ENCODE measurements at regions of chr15 and their contacts with region 1.

Region 1: GRCh38 chr15:46091860-46092450 is 457.1 kb downstream of the SQOR start:
- DNase-seq: peak; percentile 51
- H3K4me3 Mint-ChIP-seq: no peak overlapping the region
- H3K27ac Mint-ChIP-seq: no peak overlapping the region
- H3K4me1 Mint-ChIP-seq: no peaks in the 10 kb centered on the region
- H3K27me3 Mint-ChIP-seq: no peaks in the 10 kb centered on the region
- CTCF ChIP-seq: peak; percentile 23

Region 2: DNA sequence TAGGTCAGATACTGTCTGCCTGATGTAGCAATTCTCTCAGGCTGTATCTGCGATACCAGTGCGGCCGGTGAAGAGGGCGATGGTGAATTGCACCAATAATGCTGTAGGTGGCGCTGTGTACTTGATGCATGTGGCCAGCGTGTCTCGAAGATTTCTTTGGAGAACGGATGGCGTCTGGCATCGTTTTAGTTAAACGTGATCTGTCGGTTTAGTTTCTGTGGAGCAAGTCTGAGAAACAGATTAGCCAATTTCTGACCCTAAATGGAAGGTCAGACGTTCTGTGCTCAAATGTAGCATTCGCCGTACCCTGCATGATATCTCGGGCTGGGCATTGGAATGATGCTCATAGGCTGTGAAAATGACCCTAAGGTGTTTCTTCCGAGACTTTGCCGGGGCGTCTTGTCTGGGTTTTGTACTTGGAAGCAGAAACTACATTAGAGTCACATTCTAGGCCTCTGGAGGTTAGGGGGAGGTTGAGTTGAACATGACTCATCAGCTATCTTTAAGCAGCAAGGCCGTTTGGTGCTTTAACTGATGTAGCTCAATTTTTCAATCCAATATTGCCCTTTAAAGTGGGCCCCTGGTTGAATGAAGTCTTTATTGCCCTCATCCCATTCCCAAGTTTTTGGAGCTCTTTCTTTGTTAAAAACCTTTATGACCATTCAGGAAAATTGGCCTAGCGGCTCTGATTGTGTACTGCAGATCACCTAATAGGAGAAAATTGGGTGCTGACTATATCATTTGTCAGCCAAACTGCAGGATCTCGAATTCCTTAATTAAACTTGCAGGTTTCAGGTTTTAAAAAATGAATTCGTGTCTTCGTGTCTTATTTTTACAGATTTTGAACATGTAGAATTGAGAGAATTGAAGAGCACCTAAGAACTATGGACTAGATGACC is 377.1 kb before region 1 on chr15:
- CTCF ChIA-PET with region 1: no interaction called
- intact Hi-C with region 1: loop called (anchors 5 kb)
- DNase-seq: peak; percentile 67
- H3K4me3 Mint-ChIP-seq: peak overlapping the region; percentile 17
- H3K27ac Mint-ChIP-seq: no peak overlapping the region
- H3K4me1 Mint-ChIP-seq: no peaks in the 10 kb centered on the region
- H3K27me3 Mint-ChIP-seq: peaks cover 34% of the 10 kb centered on the region
- CTCF ChIP-seq: peak; percentile 50

Region 3: DNA sequence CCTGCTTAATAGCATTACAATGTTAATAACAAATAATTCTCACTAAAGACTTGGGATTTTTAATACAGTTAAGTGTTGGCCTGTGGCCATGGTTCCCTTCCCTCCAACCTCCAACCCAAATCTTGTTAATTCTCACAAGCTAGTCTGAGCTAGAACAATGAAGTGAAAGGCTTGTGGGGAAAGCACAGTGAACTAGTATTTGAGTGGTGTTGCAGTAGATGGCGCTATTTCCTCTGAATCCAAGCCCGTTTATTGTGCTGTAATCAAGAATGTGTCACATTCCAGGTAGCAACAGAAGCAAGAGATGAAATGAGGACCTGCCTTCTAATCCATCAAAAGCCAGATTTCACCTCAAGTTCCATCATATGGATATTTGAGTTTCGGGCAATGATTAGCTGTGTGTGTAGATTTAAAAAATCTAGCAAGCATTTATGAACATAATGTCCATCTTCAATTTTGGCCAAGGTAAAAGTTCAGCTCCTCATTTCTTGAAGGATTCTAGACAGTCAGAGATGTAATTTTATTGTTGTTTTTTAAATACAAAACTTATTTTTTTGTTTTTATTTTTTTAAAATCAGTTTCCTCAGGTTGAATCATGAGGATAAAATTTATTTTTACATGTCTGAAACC is 296.4 kb before region 1 on chr15:
- CTCF ChIA-PET with region 1: no interaction called
- intact Hi-C with region 1: loop called (anchors 1 kb)
- DNase-seq: peak; percentile 59
- H3K4me3 Mint-ChIP-seq: no peak overlapping the region
- H3K27ac Mint-ChIP-seq: no peak overlapping the region
- H3K4me1 Mint-ChIP-seq: no peaks in the 10 kb centered on the region
- H3K27me3 Mint-ChIP-seq: peaks cover 41% of the 10 kb centered on the region
- CTCF ChIP-seq: peak; percentile 40

Region 4: GRCh38 chr15:46260937-46261336 is 169.0 kb after region 1 on chr15:
- CTCF ChIA-PET with region 1: no interaction called
- intact Hi-C with region 1: loop called (anchors 5 kb)
- DNase-seq: peak; percentile 9
- H3K4me3 Mint-ChIP-seq: no peak overlapping the region
- H3K27ac Mint-ChIP-seq: no peak overlapping the region
- H3K4me1 Mint-ChIP-seq: no peaks in the 10 kb centered on the region
- H3K27me3 Mint-ChIP-seq: no peaks in the 10 kb centered on the region
- CTCF ChIP-seq: no peak

Region 5: DNA sequence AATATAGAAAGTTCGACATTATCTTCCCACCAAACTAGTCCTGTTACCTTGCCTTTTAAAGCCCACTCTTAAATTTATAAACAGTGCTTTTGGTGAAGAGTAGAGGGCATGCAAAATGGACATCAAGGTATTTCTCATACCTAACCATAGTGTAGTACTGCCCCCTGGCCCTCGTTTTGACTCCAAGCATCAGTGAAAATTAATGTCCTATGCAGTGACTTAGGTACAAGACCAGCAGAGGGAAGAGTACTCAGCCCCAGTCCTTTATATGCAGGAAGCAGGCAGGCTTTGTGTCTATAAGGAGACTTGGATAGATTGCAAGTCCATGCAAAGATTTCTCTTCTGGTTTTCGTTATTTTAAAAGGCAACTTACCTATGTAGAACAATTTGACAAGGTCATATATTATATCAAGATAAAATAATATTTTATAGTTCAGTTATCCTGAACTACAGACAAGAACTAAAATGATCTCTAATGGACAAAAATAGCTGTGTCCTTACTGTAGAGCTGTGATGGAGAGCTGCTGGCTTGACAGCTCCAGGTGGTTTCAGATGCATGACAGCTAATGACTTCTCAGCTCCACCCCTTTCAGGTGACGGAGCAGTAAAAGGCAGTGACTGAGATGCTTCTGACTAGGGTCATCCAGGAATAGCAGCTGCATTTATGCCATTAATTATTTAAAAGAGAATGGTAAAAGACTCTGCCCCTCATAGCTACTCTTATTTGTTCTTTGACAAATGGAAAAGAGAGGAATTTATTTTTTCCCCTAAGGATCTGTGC is 189.0 kb after region 1 on chr15:
- CTCF ChIA-PET with region 1: no interaction called
- intact Hi-C with region 1: loop called (anchors 1 kb)
- DNase-seq: peak; percentile 33
- H3K4me3 Mint-ChIP-seq: no peak overlapping the region
- H3K27ac Mint-ChIP-seq: no peak overlapping the region
- H3K4me1 Mint-ChIP-seq: no peaks in the 10 kb centered on the region
- H3K27me3 Mint-ChIP-seq: no peaks in the 10 kb centered on the region
- CTCF ChIP-seq: no peak

Measured in Calu3 (cell line).